ENCODE measurements at regions of chr19 and their contacts with region 1.

Region 1: GRCh38 chr19:33771384-33772101 is 25.1 kb upstream of the KCTD15 start:
- DNase-seq: peak; percentile 88
- H3K4me3 Mint-ChIP-seq: no peak overlapping the region
- H3K27ac Mint-ChIP-seq: no peak overlapping the region
- H3K4me1 Mint-ChIP-seq: no peaks in the 10 kb centered on the region
- H3K27me3 Mint-ChIP-seq: peaks cover 81% of the 10 kb centered on the region
- CTCF ChIP-seq: peak; percentile 90

Region 2: DNA sequence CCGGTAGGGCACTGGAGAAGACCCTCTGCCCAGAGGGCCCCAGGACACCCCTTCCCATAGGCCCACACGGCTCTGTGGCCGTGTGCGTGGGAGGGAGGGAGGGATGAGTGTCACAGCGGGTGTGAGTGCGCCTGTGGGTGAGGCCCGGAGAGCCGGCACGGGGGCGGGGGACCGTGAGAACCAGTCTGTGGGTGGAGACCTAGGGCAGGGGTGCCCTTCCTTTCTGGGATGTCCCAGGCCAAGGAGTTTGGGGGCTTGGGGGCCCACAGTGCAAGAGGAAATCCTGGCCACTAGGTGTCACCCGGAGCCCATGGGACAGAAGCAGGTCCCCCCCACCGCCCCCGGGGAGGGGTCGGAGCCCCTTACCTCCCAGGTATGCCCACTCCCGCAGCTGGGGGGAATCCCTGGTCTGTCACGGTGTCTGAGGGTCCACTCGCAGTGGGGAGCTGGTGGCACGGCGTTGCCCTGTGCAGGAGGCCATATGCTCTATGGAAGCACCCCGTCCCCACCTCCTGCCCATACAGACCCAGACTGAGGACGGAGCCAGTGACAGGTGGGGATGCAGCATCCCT is 529.9 kb before region 1 on chr19:
- CTCF ChIA-PET with region 1: no interaction called
- intact Hi-C with region 1: loop called (anchors 5 kb)
- DNase-seq: peak; percentile 41
- H3K4me3 Mint-ChIP-seq: no peak overlapping the region
- H3K27ac Mint-ChIP-seq: no peak overlapping the region
- H3K4me1 Mint-ChIP-seq: no peaks in the 10 kb centered on the region
- H3K27me3 Mint-ChIP-seq: peaks cover 55% of the 10 kb centered on the region
- CTCF ChIP-seq: peak; percentile 83

Region 3: DNA sequence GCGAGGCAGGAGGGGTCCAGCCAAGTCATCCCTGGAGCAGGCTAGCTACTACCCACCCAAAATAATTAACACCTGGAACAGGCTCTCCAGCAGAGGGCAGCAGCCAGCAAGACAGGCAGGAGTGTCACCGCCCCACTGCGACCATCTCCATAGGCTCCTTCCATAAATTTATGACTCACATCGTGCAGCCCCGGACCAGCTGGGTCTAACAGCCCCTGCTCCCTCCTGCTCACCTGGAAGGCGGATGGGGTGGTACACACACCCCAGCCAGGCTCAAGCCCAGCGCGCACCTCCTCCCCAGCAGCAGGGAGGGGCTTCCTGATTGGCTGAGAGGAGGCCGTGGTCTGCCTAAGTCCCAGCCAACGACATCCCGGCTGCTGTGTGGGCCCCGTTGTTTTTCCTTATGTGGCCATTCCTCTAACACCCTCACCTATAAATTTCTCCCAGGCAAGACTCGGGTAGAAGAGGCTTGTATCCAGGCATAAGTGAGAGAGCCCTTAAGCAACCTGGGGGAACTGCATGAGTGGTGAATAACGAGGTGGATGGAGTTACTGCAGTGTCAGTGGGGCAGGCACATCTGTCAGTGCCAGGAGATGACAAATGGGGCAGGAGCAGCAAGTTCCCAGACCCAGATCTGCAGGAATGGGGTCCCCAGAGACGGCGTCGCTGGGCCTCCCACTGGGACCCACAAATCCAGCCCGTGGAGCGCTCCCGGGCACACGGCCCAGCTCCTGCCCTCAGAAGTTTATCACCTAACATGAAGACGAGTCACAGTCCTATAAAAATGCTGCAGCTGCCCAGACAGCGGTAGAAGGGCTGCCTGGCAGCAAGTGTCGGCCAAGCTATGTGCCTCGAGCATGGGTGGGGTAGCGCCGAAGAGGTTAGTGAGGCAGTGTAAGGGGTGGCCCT is 355.0 kb before region 1 on chr19:
- CTCF ChIA-PET with region 1: interaction called, 5 read pairs
- intact Hi-C with region 1: loop called (anchors 1 kb)
- DNase-seq: peak; percentile 87
- H3K4me3 Mint-ChIP-seq: no peak overlapping the region
- H3K27ac Mint-ChIP-seq: no peak overlapping the region
- H3K4me1 Mint-ChIP-seq: peaks cover 8% of the 10 kb centered on the region
- H3K27me3 Mint-ChIP-seq: no peaks in the 10 kb centered on the region
- CTCF ChIP-seq: peak; percentile 85

Measured in Calu3 (cell line).